ENCODE measurements at regions of chr2 and their contacts with region 1.

Region 1: DNA sequence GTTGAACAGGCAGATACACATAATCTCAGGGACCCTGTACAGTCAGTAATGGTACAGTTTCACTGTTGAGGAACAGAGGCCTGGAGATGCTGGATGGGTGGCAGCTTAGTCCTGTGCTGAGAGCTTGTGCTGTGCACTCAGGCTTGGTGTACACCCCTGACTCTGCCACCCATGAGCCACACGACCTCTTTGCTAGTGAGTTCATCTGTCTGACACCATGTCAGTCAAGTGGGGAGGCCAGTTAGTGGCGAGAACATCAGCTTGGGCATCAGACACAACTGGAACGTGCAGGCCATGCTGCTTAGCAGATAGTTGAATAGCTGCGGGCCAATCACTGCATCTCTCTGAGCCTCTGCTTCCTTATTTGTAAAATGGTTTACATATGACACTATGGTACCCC is 29.5 kb downstream of the GREB1 start:
- DNase-seq: no peak
- H3K4me3 ChIP-seq: no peak overlapping the region
- H3K27ac ChIP-seq: no peak overlapping the region
- H3K4me1 ChIP-seq: no peaks in the 10 kb centered on the region
- H3K27me3 ChIP-seq: peaks cover 59% of the 10 kb centered on the region
- CTCF ChIP-seq: no peak

Region 2: GRCh38 chr2:11498543-11499080 is 64.7 kb before region 1 on chr2:
- CTCF ChIA-PET with region 1: no interaction called
- POLR2A ChIA-PET with region 1: no interaction called
- intact Hi-C with region 1: no loop called
- DNase-seq: peak; percentile 38 to 40
- H3K4me3 ChIP-seq: no peak overlapping the region
- H3K27ac ChIP-seq: no peak overlapping the region
- H3K4me1 ChIP-seq: peaks cover 6% of the 10 kb centered on the region
- H3K27me3 ChIP-seq: peaks cover 26% of the 10 kb centered on the region; the same call in 1 of the 2 replicates
- CTCF ChIP-seq: no peak

Region 3: DNA sequence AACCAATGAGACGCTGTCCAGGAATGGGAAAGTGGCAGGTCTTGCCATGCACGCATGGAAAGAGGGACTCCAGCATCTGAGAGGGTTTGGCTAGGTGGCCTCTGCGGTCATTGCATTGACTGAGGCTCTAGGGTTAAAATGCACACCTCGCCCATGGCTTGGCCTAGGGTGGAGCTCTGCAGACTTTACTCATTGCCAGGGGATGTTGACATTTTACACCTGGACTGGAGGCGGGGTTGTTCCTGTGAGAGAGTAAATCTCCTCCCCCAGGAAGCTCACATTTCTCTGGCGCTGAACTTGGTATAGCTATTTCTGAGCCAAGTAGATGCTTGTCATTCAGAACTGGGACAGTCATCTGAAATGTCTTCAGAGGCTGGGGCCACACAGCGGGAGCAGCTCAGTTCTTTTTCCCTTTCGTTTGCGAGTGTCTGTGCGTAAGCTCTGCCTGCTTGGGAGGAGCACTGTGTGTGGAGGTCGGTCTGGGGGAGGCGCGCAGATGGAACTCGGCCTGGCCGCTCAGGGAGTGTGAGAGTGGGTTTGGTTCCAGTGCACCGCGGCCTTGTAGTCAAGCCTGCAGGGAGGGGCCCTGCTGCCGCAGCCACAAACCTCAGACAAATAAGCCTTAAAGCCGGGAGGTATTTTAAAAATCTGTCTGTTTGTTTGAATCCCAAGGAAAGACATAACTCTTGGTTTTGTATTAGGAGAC is 259.6 kb after region 1 on chr2:
- CTCF ChIA-PET with region 1: no interaction called
- POLR2A ChIA-PET with region 1: no interaction called
- intact Hi-C with region 1: no loop called
- DNase-seq: peak; percentile 71 to 74
- H3K4me3 ChIP-seq: no peak overlapping the region
- H3K27ac ChIP-seq: no peak overlapping the region
- H3K4me1 ChIP-seq: no peaks in the 10 kb centered on the region
- H3K27me3 ChIP-seq: no peaks in the 10 kb centered on the region
- CTCF ChIP-seq: no peak

Region 4: DNA sequence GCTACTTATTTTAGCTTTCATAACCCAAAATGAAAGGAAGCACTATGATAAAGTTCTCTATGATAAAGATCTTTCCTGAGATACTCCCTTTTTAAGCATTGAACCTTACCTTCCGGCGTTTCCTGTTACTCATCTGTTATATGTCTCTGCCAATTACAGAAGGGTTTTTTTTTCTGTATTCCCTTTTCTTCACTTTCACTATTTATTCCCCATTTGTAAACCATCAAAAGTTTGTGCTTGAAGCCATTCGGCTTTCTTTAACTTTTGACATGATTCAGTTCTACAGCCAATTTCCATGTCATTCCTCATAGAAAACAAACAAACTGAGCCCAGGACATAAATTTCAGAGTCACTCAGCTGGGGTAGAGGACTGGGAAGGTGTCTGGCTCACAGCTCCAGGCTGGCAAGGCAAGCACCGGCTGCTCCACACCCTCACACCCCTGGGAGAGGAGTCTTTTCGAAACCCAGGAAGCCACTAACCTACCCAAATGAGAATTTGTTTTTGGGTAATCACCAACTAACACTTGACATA is 724.0 kb after region 1 on chr2:
- CTCF ChIA-PET with region 1: no interaction called
- POLR2A ChIA-PET with region 1: interaction called, 11 read pairs
- intact Hi-C with region 1: no loop called
- DNase-seq: peak in 1 of 2 experiments; percentile 90
- H3K4me3 ChIP-seq: peak overlapping the region; percentile 28; the same call in 1 of the 2 replicates
- H3K27ac ChIP-seq: peak overlapping the region; percentile 84
- H3K4me1 ChIP-seq: peaks cover 53% of the 10 kb centered on the region
- H3K27me3 ChIP-seq: no peaks in the 10 kb centered on the region
- CTCF ChIP-seq: no peak